ENCODE measurements at regions of chr18 and their contacts with region 1.

Region 1: GRCh38 chr18:55589625-55590291 is 1.8 kb upstream of the TCF4 start:
- DNase-seq: peak; percentile 81
- H3K4me3 Mint-ChIP-seq: peak overlapping the region; percentile 83
- H3K27ac Mint-ChIP-seq: peak overlapping the region; percentile 76
- H3K4me1 Mint-ChIP-seq: peaks cover 35% of the 10 kb centered on the region
- H3K27me3 Mint-ChIP-seq: peaks cover 31% of the 10 kb centered on the region

Region 2: GRCh38 chr18:55415258-55415871 is 174.4 kb before region 1 on chr18:
- intact Hi-C with region 1: loop called (anchors 10 kb)
- DNase-seq: peak; percentile 48
- H3K4me3 Mint-ChIP-seq: no peak overlapping the region
- H3K27ac Mint-ChIP-seq: no peak overlapping the region
- H3K4me1 Mint-ChIP-seq: no peaks in the 10 kb centered on the region
- H3K27me3 Mint-ChIP-seq: peaks cover 1% of the 10 kb centered on the region

Region 3: DNA sequence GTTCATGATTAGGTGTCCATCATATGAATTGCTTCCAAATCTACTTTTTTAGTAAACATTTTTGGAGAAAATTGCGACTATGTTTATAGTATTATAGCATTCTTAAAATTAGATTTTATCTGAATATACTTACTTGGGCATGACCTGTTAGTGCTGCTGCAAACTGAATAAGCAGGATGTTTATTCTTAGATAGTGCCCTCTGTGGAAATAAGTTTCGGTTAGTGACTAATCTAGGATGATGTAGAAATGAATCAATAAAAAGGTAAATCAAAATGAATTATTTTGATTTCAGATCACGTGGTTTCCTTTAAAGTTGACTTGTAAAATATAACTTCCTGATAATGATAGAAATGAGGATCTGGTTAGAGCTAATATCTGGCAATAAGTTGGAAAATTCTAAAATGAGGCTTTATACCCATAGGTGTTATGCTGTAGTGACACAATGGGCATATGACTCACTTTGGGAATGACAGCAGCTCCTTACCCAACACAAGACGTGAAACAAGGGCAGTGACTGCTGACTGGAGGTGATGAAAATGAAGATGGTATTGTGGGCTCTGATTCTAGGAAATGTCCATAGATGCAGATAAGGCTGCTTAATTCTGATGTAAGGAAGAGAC is 164.0 kb after region 1 on chr18:
- intact Hi-C with region 1: no loop called
- DNase-seq: no peak
- H3K4me3 Mint-ChIP-seq: no peak overlapping the region
- H3K27ac Mint-ChIP-seq: no peak overlapping the region
- H3K4me1 Mint-ChIP-seq: no peaks in the 10 kb centered on the region
- H3K27me3 Mint-ChIP-seq: no peaks in the 10 kb centered on the region

Region 4: GRCh38 chr18:55779691-55780585 is 190.2 kb after region 1 on chr18:
- intact Hi-C with region 1: loop called (anchors 10 kb)
- DNase-seq: no peak
- H3K4me3 Mint-ChIP-seq: peak overlapping the region; percentile 37
- H3K27ac Mint-ChIP-seq: no peak overlapping the region
- H3K4me1 Mint-ChIP-seq: peaks cover 10% of the 10 kb centered on the region
- H3K27me3 Mint-ChIP-seq: peaks cover 38% of the 10 kb centered on the region

Region 5: GRCh38 chr18:56638271-56639093 is 1048.7 kb after region 1 on chr18 and contains the start of gene TXNL1:
- intact Hi-C with region 1: loop called (anchors 5 kb)
- DNase-seq: peak; percentile 98
- H3K4me3 Mint-ChIP-seq: peak within 1 kb of the TSS; percentile 99
- H3K27ac Mint-ChIP-seq: peak within 1 kb of the TSS; percentile 97
- H3K4me1 Mint-ChIP-seq: peaks cover 55% of the 10 kb centered on the region
- H3K27me3 Mint-ChIP-seq: no peaks in the 10 kb centered on the region
- total RNA-seq, gene TXNL1: 94.2 and 100 TPM in 2 replicates

Region 6: GRCh38 chr18:57586251-57587049 is 1996.7 kb after region 1 on chr18 and contains the start of gene FECH:
- intact Hi-C with region 1: loop called (anchors 10 kb)
- DNase-seq: peak; percentile 77
- H3K4me3 Mint-ChIP-seq: peak within 1 kb of the TSS; percentile 86
- H3K27ac Mint-ChIP-seq: peak within 1 kb of the TSS; percentile 85
- H3K4me1 Mint-ChIP-seq: peaks cover 17% of the 10 kb centered on the region
- H3K27me3 Mint-ChIP-seq: no peaks in the 10 kb centered on the region
- total RNA-seq, gene FECH: 21.7 and 23.5 TPM in 2 replicates

Measured in activated T-helper 1 cell treated with anti-CD3 and anti-CD28 coated beads, Interleukin-12 subunit alpha, Interleukin-12 subunit beta, Interleukin-2, Interleukin-4 antibody, amounts not matched to agents 30 ng/mL and 10 ng/mL and 1 ng/mL, durations not matched to agents 14 hours and 24 hours and 36 hours (primary cell).